Cardiac septum (tissue), 1 donor: ENCODE measurements at regions of chr5 and their contacts with region 1.

Region 1: DNA sequence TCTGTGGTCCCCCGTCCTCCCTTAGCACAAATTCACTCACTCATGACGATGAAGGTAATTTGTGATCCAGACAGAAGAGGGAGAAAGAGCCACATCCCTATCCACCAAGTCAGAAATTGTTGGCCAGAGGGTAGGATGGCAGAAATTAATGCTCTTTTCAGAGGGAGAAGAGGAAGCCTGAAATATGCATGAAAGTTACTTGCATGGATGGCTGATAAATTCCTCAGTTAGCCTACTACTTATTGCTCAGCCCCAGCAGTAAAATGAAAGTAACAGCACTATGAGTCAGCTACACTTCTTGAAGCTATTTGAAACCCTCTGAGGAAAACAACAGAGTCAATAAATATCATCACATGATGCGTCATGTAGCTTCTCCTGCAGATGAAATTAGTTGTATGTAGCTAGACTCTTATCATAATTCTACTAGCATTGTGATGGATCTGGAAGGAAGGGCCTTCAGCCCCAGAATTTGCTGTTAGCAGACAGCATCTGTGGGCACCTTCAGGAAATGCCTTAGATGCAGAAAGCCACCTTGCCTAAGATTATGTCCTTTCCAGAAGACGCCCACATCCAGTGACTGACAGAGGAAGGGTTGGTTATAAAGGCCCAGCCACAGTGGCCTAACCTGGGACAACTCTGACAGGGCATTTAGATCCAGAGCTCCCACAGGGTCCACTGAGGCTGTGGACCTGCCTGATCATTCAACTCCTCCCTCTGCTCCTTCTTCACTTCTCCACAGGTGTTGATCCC is 81.2 kb upstream of the CCDC112 start:
- DNase-seq: no peak

Region 2: GRCh38 chr5:115271295-115272050 is 106.2 kb before region 1 on chr5:
- intact Hi-C with region 1: no loop called
- DNase-seq: no peak

Region 3: GRCh38 chr5:115309751-115310370 is 67.8 kb before region 1 on chr5:
- intact Hi-C with region 1: loop called (anchors 5 kb)
- DNase-seq: no peak

Region 4: GRCh38 chr5:115415143-115415491 is 37.5 kb after region 1 on chr5:
- intact Hi-C with region 1: loop called (anchors 5 kb)
- DNase-seq: peak; percentile 76

Region 5: GRCh38 chr5:115455301-115455707 is 77.7 kb after region 1 on chr5:
- intact Hi-C with region 1: loop called (anchors 5 kb)
- DNase-seq: no peak

Region 6: GRCh38 chr5:115544436-115545350 is 167.1 kb after region 1 on chr5 and contains the start of gene FEM1C:
- intact Hi-C with region 1: loop called (anchors 2 kb)
- DNase-seq: peak; percentile 99
- total RNA-seq, gene FEM1C: 56.1 TPM

Region 7: DNA sequence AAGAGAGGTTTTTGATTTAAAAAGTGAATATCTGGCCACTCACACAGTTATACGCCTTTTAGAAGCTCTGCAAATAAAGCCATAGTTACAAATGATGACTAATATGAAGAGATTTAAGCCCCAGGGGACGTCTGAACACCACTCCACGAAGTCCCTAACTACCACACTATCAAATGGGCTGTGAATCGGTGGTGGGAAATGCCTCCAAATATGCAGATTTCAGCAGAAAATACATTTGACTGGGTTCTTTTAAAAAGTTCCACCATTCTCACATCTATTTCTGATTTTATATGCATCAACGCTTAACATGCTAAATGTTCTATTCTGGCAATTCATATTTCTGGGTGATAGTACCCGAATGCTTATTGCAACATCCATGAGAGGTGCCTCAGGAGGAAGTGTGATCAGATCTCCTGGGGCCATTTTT is 202.1 kb after region 1 on chr5:
- intact Hi-C with region 1: loop called (anchors 2 kb)
- DNase-seq: no peak

Region 8: DNA sequence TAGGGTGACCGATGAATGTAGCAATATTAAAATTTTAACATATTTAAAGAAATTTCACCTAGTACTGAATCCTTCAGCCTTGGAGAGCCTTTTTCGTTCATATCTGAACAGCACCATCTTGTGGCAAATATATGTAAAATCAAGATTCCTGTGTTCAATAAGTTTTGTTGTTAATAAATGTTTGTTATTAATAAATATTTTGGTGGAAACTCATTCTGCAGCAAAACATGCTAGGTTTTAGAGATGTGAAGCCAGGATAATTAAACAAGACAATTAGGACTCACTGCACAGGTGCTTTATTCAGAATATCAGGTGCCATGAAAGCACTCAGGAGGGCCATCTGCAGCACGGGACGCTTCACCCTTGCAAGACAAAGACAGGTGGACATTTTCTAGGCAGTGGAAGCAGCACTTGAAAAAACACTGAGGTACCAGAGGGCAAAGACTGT is 209.0 kb after region 1 on chr5:
- intact Hi-C with region 1: loop called (anchors 5 kb)
- DNase-seq: no peak